ENCODE measurements at regions of chr10 and their contacts with region 1.

Region 1: DNA sequence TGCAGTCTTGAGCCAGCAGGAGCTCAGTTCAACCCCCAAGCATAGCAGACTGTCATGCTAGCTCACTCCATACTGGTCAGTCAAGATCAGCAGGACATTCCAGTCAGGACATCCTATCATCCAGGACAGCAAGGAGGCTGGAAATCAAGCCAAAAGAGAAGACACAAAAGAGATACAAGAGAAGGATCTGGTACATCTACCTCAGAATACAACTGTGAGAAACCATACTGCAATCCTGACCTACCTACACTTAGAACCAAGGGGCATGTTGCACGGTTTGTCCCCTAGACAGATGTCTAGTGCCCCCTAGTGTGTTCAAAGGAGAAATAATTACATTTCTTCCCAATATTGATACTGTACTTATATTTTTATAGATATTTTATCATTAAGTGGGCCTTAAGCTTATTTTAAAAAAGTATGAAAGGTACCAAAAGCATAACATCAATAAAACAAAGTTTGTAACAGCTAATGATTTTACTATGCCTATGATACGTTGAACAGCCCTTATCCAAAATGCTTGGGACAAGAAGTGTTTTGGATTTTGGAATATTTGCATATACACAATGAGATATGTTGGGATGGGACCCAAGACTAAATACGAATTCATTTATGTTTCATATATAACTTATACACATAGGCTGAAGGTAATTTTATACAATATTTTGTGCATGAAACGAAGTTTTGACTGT is 26.7 kb downstream of the ERCC6 start:
- DNase-seq: no peak
- ATAC-seq: peak; percentile 89
- H3K4me3 ChIP-seq: no peak overlapping the region
- H3K27ac ChIP-seq: no peak overlapping the region
- H3K4me1 ChIP-seq: no peaks in the 10 kb centered on the region; the same call in 1 of the 2 replicates
- H3K27me3 ChIP-seq: no peaks in the 10 kb centered on the region
- CTCF ChIP-seq: peak; percentile 60 to 77 (median 64)
- EP300 ChIP-seq: no peak
- POLR2A ChIP-seq: no peak
- RAD21 ChIP-seq: peak; percentile 76

Region 2: DNA sequence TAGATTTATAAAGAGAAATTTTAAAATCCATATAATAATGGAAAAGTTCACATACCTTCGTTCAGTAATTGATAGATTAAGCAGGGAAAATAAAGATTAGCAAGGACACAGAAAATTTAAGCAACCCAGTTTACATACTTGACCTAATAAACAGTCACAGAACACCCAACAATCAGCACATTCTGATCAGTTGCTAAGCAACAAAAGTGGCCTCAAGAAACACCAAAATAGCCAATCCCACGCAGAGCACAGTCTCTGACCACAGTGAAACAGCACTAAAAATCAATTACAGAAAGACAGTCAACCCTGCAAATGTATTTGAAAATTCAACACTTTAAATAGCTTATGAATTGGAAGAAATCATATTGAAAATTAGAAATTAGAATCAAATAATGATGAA is 77.0 kb before region 1 on chr10:
- CTCF ChIA-PET with region 1: no interaction called
- POLR2A ChIA-PET with region 1: no interaction called
- RAD21 ChIA-PET with region 1: no interaction called
- SMC1A ChIA-PET with region 1: no interaction called
- in situ Hi-C with region 1: no loop called
- intact Hi-C with region 1: no loop called
- DNase-seq: no peak
- ATAC-seq: no peak
- H3K4me3 ChIP-seq: no peak overlapping the region
- H3K27ac ChIP-seq: no peak overlapping the region
- H3K4me1 ChIP-seq: no peaks in the 10 kb centered on the region
- H3K27me3 ChIP-seq: no peaks in the 10 kb centered on the region
- CTCF ChIP-seq: no peak
- EP300 ChIP-seq: no peak
- POLR2A ChIP-seq: no peak
- RAD21 ChIP-seq: no peak

Region 3: GRCh38 chr10:49500418-49500817 is 11.8 kb before region 1 on chr10:
- CTCF ChIA-PET with region 1: interaction called, 54 read pairs
- POLR2A ChIA-PET with region 1: no interaction called
- RAD21 ChIA-PET with region 1: no interaction called
- SMC1A ChIA-PET with region 1: interaction called, 10 read pairs
- in situ Hi-C with region 1: no loop called
- intact Hi-C with region 1: no loop called
- DNase-seq: no peak
- ATAC-seq: no peak
- H3K4me3 ChIP-seq: no peak overlapping the region
- H3K27ac ChIP-seq: no peak overlapping the region
- H3K4me1 ChIP-seq: no peaks in the 10 kb centered on the region
- H3K27me3 ChIP-seq: no peaks in the 10 kb centered on the region
- CTCF ChIP-seq: no peak
- EP300 ChIP-seq: no peak
- POLR2A ChIP-seq: no peak
- RAD21 ChIP-seq: no peak

Region 4: DNA sequence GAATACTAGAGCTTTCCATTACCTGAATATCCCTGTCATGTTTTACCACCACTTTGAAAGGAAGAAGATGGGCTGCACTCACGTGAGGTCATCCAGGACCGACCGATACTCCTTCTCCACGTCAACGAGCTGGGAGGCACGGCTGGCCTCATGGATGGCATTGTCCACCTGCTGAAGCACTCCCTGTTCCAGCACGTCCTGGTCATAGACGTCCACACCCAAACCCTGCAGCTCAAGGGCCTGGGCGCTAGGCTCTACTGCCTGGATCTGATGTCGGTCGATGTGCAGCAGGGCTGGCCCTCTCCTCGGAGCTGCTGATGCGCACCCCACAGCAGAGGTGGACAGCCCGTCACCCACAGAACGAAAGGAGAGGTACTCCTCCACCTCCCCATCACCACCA is 20.2 kb after region 1 on chr10:
- CTCF ChIA-PET with region 1: interaction called, 14 read pairs
- POLR2A ChIA-PET with region 1: no interaction called
- RAD21 ChIA-PET with region 1: no interaction called
- SMC1A ChIA-PET with region 1: interaction called, 5 read pairs
- in situ Hi-C with region 1: no loop called
- intact Hi-C with region 1: no loop called
- DNase-seq: no peak
- ATAC-seq: no peak
- H3K4me3 ChIP-seq: no peak overlapping the region
- H3K27ac ChIP-seq: no peak overlapping the region
- H3K4me1 ChIP-seq: peaks cover 16% of the 10 kb centered on the region
- H3K27me3 ChIP-seq: no peaks in the 10 kb centered on the region
- CTCF ChIP-seq: no peak
- EP300 ChIP-seq: no peak
- POLR2A ChIP-seq: no peak
- RAD21 ChIP-seq: no peak